ENCODE measurements at regions of chr11 and their contacts with region 1.

Region 1: GRCh38 chr11:57626895-57627294 is 22.8 kb downstream of the YPEL4 start:
- DNase-seq: no peak
- H3K4me3 ChIP-seq: no peak overlapping the region
- H3K27ac ChIP-seq: no peak overlapping the region
- H3K4me1 ChIP-seq: no peaks in the 10 kb centered on the region
- H3K27me3 ChIP-seq: no peaks in the 10 kb centered on the region
- CTCF ChIP-seq: no peak
- POLR2A ChIP-seq: no peak

Region 2: GRCh38 chr11:57751676-57752253 is 124.9 kb after region 1 on chr11 and contains the start of gene BTBD18:
- intact Hi-C with region 1: no loop called
- DNase-seq: no peak
- H3K4me3 ChIP-seq: no peak within 1 kb of the TSS
- H3K27ac ChIP-seq: peak within 1 kb of the TSS in 1 of 4 donors; percentile 11
- H3K4me1 ChIP-seq: peaks cover 0 to 10% (median 0%) of the 10 kb centered on the region in 3 donors
- H3K27me3 ChIP-seq: no peaks in the 10 kb centered on the region
- CTCF ChIP-seq: peak in 5 of 6 experiments; percentile 40 to 70 (median 53)
- POLR2A ChIP-seq: no peak
- total RNA-seq, gene BTBD18: not detected

Region 3: GRCh38 chr11:58024601-58025091 is 397.8 kb after region 1 on chr11:
- intact Hi-C with region 1: loop called (anchors 5 kb)
- DNase-seq: no peak
- H3K4me3 ChIP-seq: no peak overlapping the region
- H3K27ac ChIP-seq: peak overlapping the region in 3 of 4 donors; percentile 16 to 66 (median 40)
- H3K4me1 ChIP-seq: peaks cover 7 to 61% (median 30%) of the 10 kb centered on the region in 3 donors
- H3K27me3 ChIP-seq: no peaks in the 10 kb centered on the region
- CTCF ChIP-seq: no peak
- POLR2A ChIP-seq: no peak